ENCODE measurements at regions of chr5 and their contacts with region 1.

Region 1: DNA sequence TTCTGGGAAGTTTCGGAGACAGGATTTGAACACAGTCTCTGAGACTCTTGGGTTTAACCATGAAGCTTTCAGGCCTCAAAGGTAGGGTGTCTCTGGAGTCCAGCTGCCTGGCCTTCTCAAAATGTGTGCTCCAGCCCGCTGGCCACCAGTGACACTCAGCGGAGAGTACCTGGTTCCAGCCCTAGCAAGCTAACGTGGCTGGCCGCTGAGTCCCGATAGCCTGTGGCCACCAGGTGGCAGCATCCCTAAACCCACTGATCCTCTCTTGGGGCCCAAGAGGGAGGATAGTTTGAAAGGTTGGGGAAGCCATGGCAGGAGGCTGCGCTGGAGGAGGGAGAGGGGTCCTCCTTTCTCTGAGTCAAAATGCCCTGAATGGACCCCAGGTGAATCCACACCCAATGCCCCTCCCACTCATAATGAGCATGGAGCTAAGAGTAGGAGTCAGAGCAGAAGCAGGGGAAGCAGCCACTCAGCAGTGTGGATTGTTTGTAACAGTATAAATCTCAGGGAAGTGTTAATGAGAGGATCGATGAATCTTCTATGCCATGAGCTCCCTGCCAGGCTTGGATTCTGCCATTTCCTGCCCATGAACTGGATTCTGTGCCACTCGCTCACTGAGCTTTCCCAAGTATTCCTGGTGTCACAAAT is 5.4 kb upstream of the TIFAB start:
- DNase-seq: peak; percentile 74
- ATAC-seq: peak; percentile 84
- H3K4me3 ChIP-seq: no peak overlapping the region
- H3K27ac ChIP-seq: no peak overlapping the region
- H3K4me1 ChIP-seq: peaks cover 10 to 38% of the 10 kb centered on the region in 2 experiments
- H3K27me3 ChIP-seq: no peaks in the 10 kb centered on the region
- CTCF ChIP-seq: peak; percentile 89 to 97 (median 95)
- POLR2A ChIP-seq: no peak
- RAD21 ChIP-seq: peak; percentile 71

Region 2: GRCh38 chr5:135174315-135175096 is 283.0 kb before region 1 on chr5:
- CTCF ChIA-PET with region 1: no interaction called
- POLR2A ChIA-PET with region 1: no interaction called
- RAD21 ChIA-PET with region 1: no interaction called
- intact Hi-C with region 1: no loop called
- DNase-seq: no peak
- ATAC-seq: peak; percentile 75
- H3K4me3 ChIP-seq: no peak overlapping the region
- H3K27ac ChIP-seq: no peak overlapping the region
- H3K4me1 ChIP-seq: peaks cover 6 to 7% of the 10 kb centered on the region in 2 experiments; a peak in 3 of 4 replicates
- H3K27me3 ChIP-seq: peaks cover 34% of the 10 kb centered on the region
- CTCF ChIP-seq: peak; percentile 17 to 52 (median 45); a peak in 4 of 6 replicates
- POLR2A ChIP-seq: no peak
- RAD21 ChIP-seq: peak; percentile 40

Region 3: DNA sequence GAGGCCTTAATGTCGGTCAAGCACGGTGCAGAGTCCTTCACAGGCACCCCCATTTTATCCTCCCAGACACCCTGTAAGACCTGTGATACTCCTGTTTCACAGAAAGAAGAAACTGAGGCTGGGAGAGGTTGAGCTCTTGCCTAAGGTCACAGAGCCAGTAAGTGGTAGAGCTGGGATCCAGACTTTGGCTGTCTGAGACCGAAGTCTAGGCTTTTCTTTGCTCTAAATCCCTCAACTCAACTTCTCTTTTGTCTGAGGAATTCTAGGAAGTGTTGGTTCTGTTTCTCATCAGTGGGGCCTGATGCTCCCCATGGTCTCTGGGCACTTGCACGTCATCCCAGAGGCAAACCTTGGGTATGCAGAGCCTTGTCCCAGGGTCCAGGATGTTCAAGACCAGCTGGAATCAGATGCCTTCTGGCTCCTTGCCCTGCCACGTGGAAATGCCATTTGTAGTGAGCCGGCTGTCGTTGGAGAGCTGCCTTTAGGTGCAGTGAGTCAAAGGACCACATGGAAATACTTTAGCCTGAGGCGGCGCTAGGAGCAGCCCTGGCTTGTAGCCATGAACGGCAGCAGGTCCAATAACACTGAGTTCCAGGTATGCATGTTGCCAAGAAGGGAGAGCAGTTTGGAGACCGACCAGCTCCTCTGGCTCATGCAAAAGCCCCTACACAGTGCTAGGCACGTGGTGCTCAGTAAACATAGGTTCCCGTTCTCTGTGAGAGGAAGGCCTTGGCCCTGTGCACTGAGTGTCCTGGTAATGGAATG is 19.6 kb before region 1 on chr5:
- CTCF ChIA-PET with region 1: interaction called, 14 read pairs
- POLR2A ChIA-PET with region 1: no interaction called
- RAD21 ChIA-PET with region 1: no interaction called
- intact Hi-C with region 1: no loop called
- DNase-seq: peak; percentile 44
- ATAC-seq: peak; percentile 79
- H3K4me3 ChIP-seq: no peak overlapping the region
- H3K27ac ChIP-seq: no peak overlapping the region
- H3K4me1 ChIP-seq: peaks cover 10 to 17% of the 10 kb centered on the region in 2 experiments; a peak in 3 of 4 replicates
- H3K27me3 ChIP-seq: no peaks in the 10 kb centered on the region
- CTCF ChIP-seq: 0 out of 6 replicates have a peak, but pooled peaks of 1 of the 3 experiments have one; percentile 17
- POLR2A ChIP-seq: no peak
- RAD21 ChIP-seq: no peak

Region 4: GRCh38 chr5:135560858-135561257 is 103.3 kb after region 1 on chr5:
- CTCF ChIA-PET with region 1: interaction called, 476 read pairs
- POLR2A ChIA-PET with region 1: no interaction called
- RAD21 ChIA-PET with region 1: interaction called, 5 to 9 read pairs
- intact Hi-C with region 1: loop called (anchors 1 kb)
- DNase-seq: peak; percentile 65
- ATAC-seq: peak; percentile 97
- H3K4me3 ChIP-seq: no peak overlapping the region
- H3K27ac ChIP-seq: no peak overlapping the region
- H3K4me1 ChIP-seq: peaks cover 0 to 7% of the 10 kb centered on the region in 2 experiments; a peak in 1 of 4 replicates
- H3K27me3 ChIP-seq: no peaks in the 10 kb centered on the region
- CTCF ChIP-seq: peak; percentile 84 to 90 (median 84)
- POLR2A ChIP-seq: no peak
- RAD21 ChIP-seq: peak; percentile 88

Region 5: DNA sequence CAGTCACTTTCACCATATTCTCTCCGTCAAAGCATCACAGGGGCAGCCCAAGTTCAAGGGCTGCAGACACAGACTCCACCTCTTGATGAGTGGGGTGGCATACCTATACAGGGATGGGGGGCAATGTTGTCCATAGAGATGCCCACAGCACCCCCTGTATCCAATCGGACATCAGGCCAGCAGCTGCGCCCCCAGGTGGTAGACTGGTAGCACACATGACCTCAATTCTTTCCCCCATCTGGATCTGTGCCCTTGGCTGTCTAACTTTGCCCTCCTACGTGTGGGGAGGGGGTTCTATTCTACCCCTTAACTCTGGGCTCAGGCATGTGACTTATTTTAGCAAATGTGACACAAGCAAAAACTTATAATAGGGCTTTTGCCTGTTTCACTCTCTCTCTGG is 293.0 kb after region 1 on chr5:
- CTCF ChIA-PET with region 1: no interaction called
- POLR2A ChIA-PET with region 1: no interaction called
- RAD21 ChIA-PET with region 1: no interaction called
- intact Hi-C with region 1: no loop called
- DNase-seq: no peak
- ATAC-seq: peak; percentile 44; the same call in 1 of the 2 replicates
- H3K4me3 ChIP-seq: no peak overlapping the region
- H3K27ac ChIP-seq: no peak overlapping the region
- H3K4me1 ChIP-seq: no peaks in the 10 kb centered on the region
- H3K27me3 ChIP-seq: no peaks in the 10 kb centered on the region
- CTCF ChIP-seq: peak in 2 of 3 experiments; percentile 40 to 43; a peak in 4 of 6 replicates
- POLR2A ChIP-seq: no peak
- RAD21 ChIP-seq: no peak

Region 6: GRCh38 chr5:135950611-135951010 is 493.1 kb after region 1 on chr5:
- CTCF ChIA-PET with region 1: no interaction called
- POLR2A ChIA-PET with region 1: no interaction called
- RAD21 ChIA-PET with region 1: no interaction called
- intact Hi-C with region 1: loop called (anchors 5 kb)
- DNase-seq: no peak
- ATAC-seq: no peak
- H3K4me3 ChIP-seq: no peak overlapping the region
- H3K27ac ChIP-seq: no peak overlapping the region
- H3K4me1 ChIP-seq: no peaks in the 10 kb centered on the region
- H3K27me3 ChIP-seq: peaks cover 19% of the 10 kb centered on the region; the same call in 1 of the 2 replicates
- CTCF ChIP-seq: no peak
- POLR2A ChIP-seq: no peak
- RAD21 ChIP-seq: no peak

Measured in HCT116 (cell line).